ENCODE measurements at regions of chr7 and their contacts with region 1.

Region 1: GRCh38 chr7:116180302-116180701 is 30.0 kb upstream of the TES start:
- DNase-seq: no peak
- ATAC-seq: peak; percentile 77
- H3K4me3 Mint-ChIP-seq: no peak overlapping the region
- H3K27ac Mint-ChIP-seq: no peak overlapping the region
- H3K4me1 Mint-ChIP-seq: no peaks in the 10 kb centered on the region
- H3K27me3 Mint-ChIP-seq: no peaks in the 10 kb centered on the region

Region 2: DNA sequence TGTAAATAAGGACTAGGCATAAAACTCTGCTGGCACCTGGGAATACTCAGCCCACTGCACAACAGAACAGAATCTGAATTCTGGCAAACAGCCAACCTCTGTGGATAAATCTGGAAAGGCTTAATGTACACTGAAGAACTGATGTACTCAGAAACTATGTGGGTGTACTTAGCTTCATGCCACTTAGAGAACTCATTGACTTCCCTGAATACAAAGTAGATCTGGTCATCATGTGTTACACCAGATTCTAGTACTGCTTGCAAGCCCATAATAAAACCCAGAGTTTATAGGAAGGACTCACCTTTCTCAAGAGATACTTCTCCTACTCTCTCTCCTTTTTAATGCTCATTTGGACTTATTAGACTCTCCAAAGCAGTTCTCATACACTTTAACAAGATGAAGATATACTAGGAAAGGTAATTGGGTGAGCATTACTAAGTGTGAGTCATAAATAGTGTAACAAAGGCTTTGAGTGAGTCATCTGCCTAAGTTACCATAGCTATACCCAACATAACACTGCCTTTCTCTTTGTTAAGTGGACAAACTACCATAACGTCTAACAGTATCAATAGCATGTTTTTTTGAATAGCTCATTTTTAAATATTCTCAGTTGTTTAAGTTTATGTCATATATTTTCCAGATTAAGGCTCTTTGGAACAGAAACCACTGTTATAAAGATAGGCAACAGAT is 949.3 kb before region 1 on chr7:
- CTCF ChIA-PET with region 1: no interaction called
- DNase-seq: no peak
- ATAC-seq: peak; percentile 80
- H3K4me3 Mint-ChIP-seq: no peak overlapping the region
- H3K27ac Mint-ChIP-seq: no peak overlapping the region
- H3K4me1 Mint-ChIP-seq: peaks cover 7% of the 10 kb centered on the region
- H3K27me3 Mint-ChIP-seq: no peaks in the 10 kb centered on the region

Region 3: GRCh38 chr7:115799430-115799829 is 380.9 kb before region 1 on chr7:
- CTCF ChIA-PET with region 1: no interaction called
- DNase-seq: no peak
- ATAC-seq: no peak
- H3K4me3 Mint-ChIP-seq: no peak overlapping the region
- H3K27ac Mint-ChIP-seq: no peak overlapping the region
- H3K4me1 Mint-ChIP-seq: no peaks in the 10 kb centered on the region
- H3K27me3 Mint-ChIP-seq: peaks cover 2% of the 10 kb centered on the region

Region 4: DNA sequence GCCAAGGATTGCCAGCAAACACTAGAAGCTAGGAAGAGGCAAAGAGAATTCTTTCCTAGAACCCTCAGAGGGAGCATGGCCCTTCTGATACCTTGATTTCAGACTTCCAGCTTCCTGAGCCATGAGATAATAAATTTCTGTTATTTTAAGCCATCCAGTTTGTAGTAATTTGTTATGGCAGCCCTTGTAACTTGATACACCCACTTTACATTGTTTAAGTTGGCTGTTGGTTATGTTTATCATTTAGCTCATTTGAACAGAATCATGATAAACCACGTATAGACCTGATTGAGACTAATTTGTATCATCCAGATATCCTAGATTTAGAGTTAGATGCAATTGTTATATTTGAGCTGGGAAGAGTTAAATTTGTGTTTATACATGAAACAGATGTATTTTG is 20.7 kb after region 1 on chr7:
- CTCF ChIA-PET with region 1: interaction called, 11 read pairs
- DNase-seq: no peak
- ATAC-seq: no peak
- H3K4me3 Mint-ChIP-seq: no peak overlapping the region
- H3K27ac Mint-ChIP-seq: no peak overlapping the region
- H3K4me1 Mint-ChIP-seq: no peaks in the 10 kb centered on the region
- H3K27me3 Mint-ChIP-seq: peaks cover 12% of the 10 kb centered on the region

Region 5: GRCh38 chr7:116211006-116211912 is 31.0 kb after region 1 on chr7:
- CTCF ChIA-PET with region 1: interaction called, 33 read pairs
- DNase-seq: peak; percentile 88
- ATAC-seq: peak; percentile 82
- H3K4me3 Mint-ChIP-seq: peak overlapping the region; percentile 96
- H3K27ac Mint-ChIP-seq: peak overlapping the region; percentile 98
- H3K4me1 Mint-ChIP-seq: peaks cover 52% of the 10 kb centered on the region
- H3K27me3 Mint-ChIP-seq: no peaks in the 10 kb centered on the region

Region 6: DNA sequence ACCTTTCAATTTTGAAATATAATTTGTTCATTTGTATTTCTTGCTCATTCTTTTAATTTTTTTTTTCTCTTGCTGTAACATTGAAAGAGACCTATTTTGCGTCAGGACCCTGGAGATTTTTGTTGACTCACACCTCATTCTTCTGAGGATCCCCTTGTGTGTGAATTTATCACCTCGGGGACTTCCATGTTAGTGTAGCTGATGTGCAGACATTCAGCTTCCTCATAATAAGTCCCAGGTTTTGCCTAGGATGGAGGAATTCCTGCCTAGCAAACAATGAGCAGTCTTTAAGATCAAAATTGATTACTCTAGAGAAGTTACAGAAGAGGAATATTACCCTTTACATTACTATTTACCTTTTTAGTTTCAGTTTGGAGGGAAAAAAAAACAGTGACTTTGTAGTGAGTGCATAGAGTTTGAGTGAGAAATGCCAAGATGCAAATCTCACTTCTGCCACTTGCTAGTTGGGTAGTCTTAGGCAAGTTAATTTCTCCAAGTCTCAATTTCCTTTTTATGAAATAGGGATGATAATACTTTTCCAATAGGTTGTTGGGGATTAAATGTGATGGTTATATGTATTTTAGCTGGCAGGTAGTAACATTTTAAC is 44.3 kb after region 1 on chr7:
- CTCF ChIA-PET with region 1: interaction called, 11 read pairs
- DNase-seq: no peak
- ATAC-seq: peak; percentile 49
- H3K4me3 Mint-ChIP-seq: peak overlapping the region; percentile 24
- H3K27ac Mint-ChIP-seq: peak overlapping the region; percentile 16
- H3K4me1 Mint-ChIP-seq: peaks cover 56% of the 10 kb centered on the region
- H3K27me3 Mint-ChIP-seq: no peaks in the 10 kb centered on the region

Region 7: GRCh38 chr7:116284390-116284789 is 104.1 kb after region 1 on chr7:
- CTCF ChIA-PET with region 1: no interaction called
- DNase-seq: no peak
- ATAC-seq: no peak
- H3K4me3 Mint-ChIP-seq: no peak overlapping the region
- H3K27ac Mint-ChIP-seq: no peak overlapping the region
- H3K4me1 Mint-ChIP-seq: peaks cover 2% of the 10 kb centered on the region
- H3K27me3 Mint-ChIP-seq: peaks cover 10% of the 10 kb centered on the region

Region 8: GRCh38 chr7:116395125-116395791 is 215.0 kb after region 1 on chr7:
- CTCF ChIA-PET with region 1: no interaction called
- DNase-seq: no peak
- ATAC-seq: no peak
- H3K4me3 Mint-ChIP-seq: no peak overlapping the region
- H3K27ac Mint-ChIP-seq: no peak overlapping the region
- H3K4me1 Mint-ChIP-seq: no peaks in the 10 kb centered on the region
- H3K27me3 Mint-ChIP-seq: peaks cover 20% of the 10 kb centered on the region